ENCODE measurements at regions of chr20 and their contacts with region 1.

Region 1: GRCh38 chr20:17248224-17248623 is 21.4 kb downstream of the PCSK2 start:
- DNase-seq: no peak
- ATAC-seq: no peak
- H3K4me3 ChIP-seq: no peak overlapping the region
- H3K27ac ChIP-seq: no peak overlapping the region
- H3K4me1 ChIP-seq: no peaks in the 10 kb centered on the region
- H3K27me3 ChIP-seq: no peaks in the 10 kb centered on the region
- CTCF ChIP-seq: no peak
- POLR2A ChIP-seq: no peak

Region 2: GRCh38 chr20:17304774-17305173 is 56.5 kb after region 1 on chr20:
- intact Hi-C with region 1: loop called (anchors 10 kb)
- DNase-seq: no peak
- ATAC-seq: no peak
- H3K4me3 ChIP-seq: no peak overlapping the region
- H3K27ac ChIP-seq: no peak overlapping the region
- H3K4me1 ChIP-seq: no peaks in the 10 kb centered on the region
- H3K27me3 ChIP-seq: no peaks in the 10 kb centered on the region
- CTCF ChIP-seq: no peak
- POLR2A ChIP-seq: no peak

Region 3: DNA sequence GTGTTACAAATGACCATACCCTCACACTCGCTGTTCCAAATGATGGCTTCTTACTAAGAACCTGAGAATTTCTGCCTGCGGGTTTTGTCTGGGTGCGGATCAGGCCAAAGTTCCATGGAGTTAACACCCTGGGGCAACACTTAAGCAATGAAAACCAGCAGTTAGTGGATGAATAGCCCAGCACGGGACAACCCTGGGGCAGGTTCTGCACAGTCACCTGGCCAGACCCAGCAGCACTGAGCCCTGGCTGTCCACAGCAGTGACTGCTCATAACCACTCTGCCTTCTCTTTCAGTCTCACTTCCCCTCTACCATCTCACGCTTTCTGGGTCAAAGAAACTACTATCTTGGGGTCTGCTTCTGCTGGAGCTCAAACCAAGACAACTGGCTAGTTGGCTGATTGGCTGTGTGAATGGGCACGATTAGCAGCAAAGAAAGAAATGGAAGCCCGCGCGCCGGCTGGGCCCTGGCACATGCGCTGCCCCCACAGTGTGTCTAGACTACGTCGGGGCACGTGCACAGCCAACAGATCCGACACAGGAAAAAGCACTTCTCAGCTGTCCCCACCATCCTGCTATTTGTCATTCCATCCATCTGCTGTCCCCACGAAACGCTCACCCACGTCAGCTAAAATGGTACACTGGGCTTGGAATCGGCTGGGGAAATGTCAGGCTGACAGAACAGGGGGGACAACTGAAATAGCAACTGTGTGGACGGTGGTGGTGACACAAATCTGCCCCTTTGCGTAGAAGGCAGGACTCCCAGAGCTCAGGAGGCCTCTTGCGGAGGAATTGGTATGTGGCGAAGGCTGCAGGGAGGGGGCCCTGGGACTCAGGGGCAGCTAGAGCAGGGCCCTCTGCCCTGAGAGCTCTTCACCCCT is 757.2 kb after region 1 on chr20:
- intact Hi-C with region 1: no loop called
- DNase-seq: no peak
- ATAC-seq: no peak
- H3K4me3 ChIP-seq: no peak overlapping the region
- H3K27ac ChIP-seq: no peak overlapping the region
- H3K4me1 ChIP-seq: peaks cover 11% of the 10 kb centered on the region
- H3K27me3 ChIP-seq: no peaks in the 10 kb centered on the region
- CTCF ChIP-seq: no peak
- POLR2A ChIP-seq: no peak